ENCODE measurements at regions of chr5 and their contacts with region 1.

Region 1: DNA sequence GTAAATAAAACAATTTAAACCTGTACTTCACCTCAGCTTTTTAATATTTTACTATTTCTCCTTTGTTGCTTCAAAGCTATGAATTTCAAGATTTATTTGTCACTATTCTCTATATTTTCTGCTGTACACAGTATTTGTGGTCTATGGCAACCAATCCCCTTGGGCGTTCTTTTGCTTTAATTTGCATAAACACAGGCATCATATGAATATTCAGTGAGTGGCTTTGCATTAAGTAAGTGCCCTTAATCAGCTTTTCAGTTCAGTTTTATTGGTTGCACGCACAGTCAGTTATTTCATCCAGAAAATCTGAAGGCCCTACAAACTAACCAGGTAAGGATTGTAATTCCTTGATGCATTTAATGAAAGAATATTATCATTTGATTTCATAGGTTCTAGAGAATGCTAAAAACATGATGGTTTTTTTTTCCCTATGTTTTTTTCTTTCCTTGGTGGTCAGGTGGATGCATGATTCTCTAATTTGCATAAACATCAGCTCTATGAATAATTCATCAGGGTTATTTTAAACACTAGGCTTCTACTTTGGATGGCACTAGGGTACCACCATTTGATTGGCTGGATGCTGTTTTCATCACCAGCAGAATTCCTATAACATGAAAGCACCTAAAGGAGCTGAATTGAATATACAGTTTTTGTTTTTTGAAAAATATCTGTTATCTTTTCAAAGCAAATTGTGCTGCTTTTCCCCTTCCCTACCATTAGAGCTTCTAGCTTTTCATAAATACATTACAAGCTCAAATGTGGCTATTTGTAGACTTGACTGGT is 249.2 kb upstream of the CCNH start:
- DNase-seq: no peak
- H3K4me3 ChIP-seq: no peak overlapping the region
- H3K4me3 Mint-ChIP-seq: no peak overlapping the region
- H3K27ac Mint-ChIP-seq: no peak overlapping the region
- H3K4me1 ChIP-seq: no peaks in the 10 kb centered on the region
- H3K4me1 Mint-ChIP-seq: no peaks in the 10 kb centered on the region
- H3K27me3 ChIP-seq: no peaks in the 10 kb centered on the region
- H3K27me3 Mint-ChIP-seq: no peaks in the 10 kb centered on the region
- CTCF ChIP-seq: no peak

Region 2: DNA sequence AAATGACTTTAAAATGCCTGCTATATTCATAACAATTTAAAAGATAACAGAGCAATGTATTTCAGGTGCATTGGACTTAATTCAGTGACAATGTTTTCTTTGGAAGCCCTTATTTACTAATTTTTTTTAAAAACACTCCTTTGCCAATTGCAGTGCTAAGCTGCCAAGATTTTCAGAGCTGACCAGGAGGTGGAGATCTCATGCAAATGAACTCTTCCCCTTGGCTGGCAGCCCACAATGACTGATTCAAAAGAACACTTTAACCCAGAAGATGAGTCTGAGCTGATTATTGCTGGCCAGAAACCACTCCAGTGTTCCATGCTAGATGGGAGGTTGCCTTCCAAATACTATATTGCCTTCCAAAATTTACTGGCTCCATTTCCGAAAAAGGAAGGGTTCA is 120.9 kb before region 1 on chr5:
- CTCF ChIA-PET with region 1: no interaction called
- POLR2A ChIA-PET with region 1: no interaction called
- intact Hi-C with region 1: loop called (anchors 10 kb)
- DNase-seq: peak in 1 of 2 experiments; percentile 7
- H3K4me3 ChIP-seq: no peak overlapping the region
- H3K4me3 Mint-ChIP-seq: no peak overlapping the region
- H3K27ac Mint-ChIP-seq: no peak overlapping the region
- H3K4me1 ChIP-seq: no peaks in the 10 kb centered on the region
- H3K4me1 Mint-ChIP-seq: no peaks in the 10 kb centered on the region
- H3K27me3 ChIP-seq: no peaks in the 10 kb centered on the region
- H3K27me3 Mint-ChIP-seq: peaks cover 4% of the 10 kb centered on the region
- CTCF ChIP-seq: no peak

Region 3: GRCh38 chr5:87640902-87641301 is 21.1 kb before region 1 on chr5:
- CTCF ChIA-PET with region 1: no interaction called
- POLR2A ChIA-PET with region 1: no interaction called
- intact Hi-C with region 1: no loop called
- DNase-seq: no peak
- H3K4me3 ChIP-seq: no peak overlapping the region
- H3K4me3 Mint-ChIP-seq: no peak overlapping the region
- H3K27ac Mint-ChIP-seq: no peak overlapping the region
- H3K4me1 ChIP-seq: no peaks in the 10 kb centered on the region
- H3K4me1 Mint-ChIP-seq: no peaks in the 10 kb centered on the region
- H3K27me3 ChIP-seq: no peaks in the 10 kb centered on the region
- H3K27me3 Mint-ChIP-seq: no peaks in the 10 kb centered on the region
- CTCF ChIP-seq: no peak